Psoas muscle (tissue), 8 donors: ENCODE measurements at regions of chr19 and their contacts with region 1.

Region 1: GRCh38 chr19:49570138-49570856 is 10.1 kb downstream of the NOSIP start:
- DNase-seq: no peak
- ATAC-seq: peak; percentile 61 to 77 (median 71)
- H3K4me3 ChIP-seq: peak overlapping the region; percentile 27
- H3K27ac ChIP-seq: peak overlapping the region; percentile 86
- H3K4me1 ChIP-seq: peaks cover 45% of the 10 kb centered on the region
- H3K27me3 ChIP-seq: no peaks in the 10 kb centered on the region
- CTCF ChIP-seq: peak; percentile 98

Region 2: GRCh38 chr19:49502866-49503581 is 67.3 kb before region 1 on chr19:
- intact Hi-C with region 1: loop called in 1 of 2 experiments (anchors 1 kb)
- DNase-seq: peak in 1 of 2 donors; percentile 52
- ATAC-seq: peak; percentile 50 to 71 (median 62)
- H3K4me3 ChIP-seq: peak overlapping the region; percentile 34
- H3K27ac ChIP-seq: no peak overlapping the region
- H3K4me1 ChIP-seq: peaks cover 32% of the 10 kb centered on the region
- H3K27me3 ChIP-seq: no peaks in the 10 kb centered on the region
- CTCF ChIP-seq: peak; percentile 65

Region 3: DNA sequence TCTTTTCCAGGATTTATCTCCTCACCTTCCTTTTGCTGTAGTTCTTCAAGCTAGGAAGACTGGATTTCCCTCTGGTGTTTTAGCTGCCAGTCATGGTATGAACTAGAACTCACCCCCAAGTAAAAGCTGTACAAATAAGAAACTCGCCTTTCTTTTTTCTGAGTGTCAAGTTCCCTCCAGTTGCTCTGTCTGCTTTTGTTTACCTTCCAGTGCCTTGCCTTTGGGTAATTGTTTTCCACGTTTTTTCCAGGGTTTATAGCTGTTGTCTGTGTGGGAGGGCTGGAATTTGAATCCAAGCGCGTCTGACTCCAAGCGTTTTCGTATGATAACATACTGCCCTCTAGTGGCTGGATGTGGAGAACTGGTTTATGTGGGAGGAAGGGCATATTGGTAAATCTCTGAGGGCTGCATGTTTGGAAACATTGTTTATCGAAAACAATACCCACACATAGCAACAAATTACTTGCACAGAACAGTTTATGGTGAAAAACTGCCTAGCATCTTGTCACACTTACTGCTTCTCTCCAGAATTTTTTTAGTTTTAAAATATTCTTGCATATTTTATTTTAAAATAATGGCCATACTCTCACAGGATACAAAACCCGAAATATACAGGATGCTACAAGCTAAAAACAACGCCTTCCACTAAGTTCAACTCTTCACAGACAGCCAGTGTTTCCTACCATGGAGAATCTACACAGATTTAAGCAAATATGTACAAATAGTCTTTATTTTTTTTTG is 23.3 kb before region 1 on chr19:
- intact Hi-C with region 1: loop called in 1 of 2 experiments (anchors 1 kb)
- DNase-seq: no peak
- ATAC-seq: peak; percentile 81 to 95 (median 86)
- H3K4me3 ChIP-seq: peak overlapping the region; percentile 35
- H3K27ac ChIP-seq: no peak overlapping the region
- H3K4me1 ChIP-seq: peaks cover 5% of the 10 kb centered on the region
- H3K27me3 ChIP-seq: no peaks in the 10 kb centered on the region
- CTCF ChIP-seq: peak; percentile 85